ENCODE measurements at regions of chr10 and their contacts with region 1.

Region 1: GRCh38 chr10:57579926-57580325 is 687.8 kb downstream of the IPMK start:
- DNase-seq: peak; percentile 1
- H3K27ac ChIP-seq: no peak overlapping the region
- CTCF ChIP-seq: no peak; the same call in 1 of the 2 replicates

Region 2: GRCh38 chr10:57657164-57657765 is 77.3 kb after region 1 on chr10:
- CTCF ChIA-PET with region 1: interaction called, 23 read pairs
- POLR2A ChIA-PET with region 1: no interaction called
- DNase-seq: peak; percentile 59
- H3K27ac ChIP-seq: no peak overlapping the region
- CTCF ChIP-seq: peak; percentile 82